ENCODE measurements at regions of chr5 and their contacts with region 1.

Region 1: DNA sequence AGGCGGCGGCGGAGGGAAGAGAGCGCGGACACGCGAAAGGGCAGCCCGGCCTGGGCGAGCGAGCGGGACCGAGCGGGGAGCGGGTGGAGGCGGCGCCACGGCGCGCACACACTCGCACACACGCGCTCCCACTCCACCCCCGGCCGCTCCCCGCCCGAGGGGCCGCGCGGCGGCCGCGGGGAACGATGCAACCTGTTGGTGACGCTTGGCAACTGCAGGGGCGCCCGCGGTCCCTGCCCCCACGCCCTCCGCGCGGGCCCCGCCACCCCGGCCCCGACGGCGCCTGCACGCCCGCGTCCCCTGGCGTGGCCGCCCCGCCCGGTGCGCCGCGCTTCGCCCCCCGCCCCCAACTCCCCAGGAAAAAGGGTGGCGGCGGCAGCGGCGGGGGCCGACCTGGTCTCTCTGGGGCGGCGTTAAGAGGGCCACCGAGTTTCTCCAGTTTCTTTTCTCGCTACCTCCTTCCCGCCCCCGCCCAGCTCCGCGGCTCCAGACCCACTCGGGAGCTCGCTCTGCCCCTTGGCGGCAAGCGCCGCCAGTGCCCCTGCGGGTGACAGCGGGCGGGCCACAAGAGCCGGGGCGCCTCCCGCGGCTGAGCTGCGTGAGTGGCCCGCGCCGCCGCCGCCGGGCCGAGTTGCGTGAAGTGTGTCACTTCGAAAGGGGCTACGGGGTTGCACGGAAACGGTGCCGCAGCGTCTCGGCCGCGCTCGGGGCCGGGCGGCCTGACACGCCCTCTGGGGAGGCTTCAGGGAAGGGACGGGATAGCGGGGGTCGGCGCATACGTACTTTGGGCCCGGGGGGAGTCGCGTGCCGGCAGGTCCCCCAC is at the start of gene NR3C1:
- DNase-seq: peak; percentile 94
- H3K4me3 ChIP-seq: peak within 1 kb of the TSS; percentile 99
- H3K27ac ChIP-seq: peak within 1 kb of the TSS; percentile 98
- H3K4me1 ChIP-seq: peaks cover 10% of the 10 kb centered on the region; the same call in 1 of the 2 replicates
- H3K27me3 ChIP-seq: no peaks in the 10 kb centered on the region
- total RNA-seq, gene NR3C1: 121 and 125 TPM in 2 replicates

Region 2: GRCh38 chr5:143824851-143825720 is 421.3 kb after region 1 on chr5:
- in situ Hi-C with region 1: loop called (anchors 5 kb)
- DNase-seq: peak; percentile 75
- H3K4me3 ChIP-seq: no peak overlapping the region
- H3K27ac ChIP-seq: no peak overlapping the region
- H3K4me1 ChIP-seq: peaks cover 25% of the 10 kb centered on the region
- H3K27me3 ChIP-seq: no peaks in the 10 kb centered on the region

Region 3: DNA sequence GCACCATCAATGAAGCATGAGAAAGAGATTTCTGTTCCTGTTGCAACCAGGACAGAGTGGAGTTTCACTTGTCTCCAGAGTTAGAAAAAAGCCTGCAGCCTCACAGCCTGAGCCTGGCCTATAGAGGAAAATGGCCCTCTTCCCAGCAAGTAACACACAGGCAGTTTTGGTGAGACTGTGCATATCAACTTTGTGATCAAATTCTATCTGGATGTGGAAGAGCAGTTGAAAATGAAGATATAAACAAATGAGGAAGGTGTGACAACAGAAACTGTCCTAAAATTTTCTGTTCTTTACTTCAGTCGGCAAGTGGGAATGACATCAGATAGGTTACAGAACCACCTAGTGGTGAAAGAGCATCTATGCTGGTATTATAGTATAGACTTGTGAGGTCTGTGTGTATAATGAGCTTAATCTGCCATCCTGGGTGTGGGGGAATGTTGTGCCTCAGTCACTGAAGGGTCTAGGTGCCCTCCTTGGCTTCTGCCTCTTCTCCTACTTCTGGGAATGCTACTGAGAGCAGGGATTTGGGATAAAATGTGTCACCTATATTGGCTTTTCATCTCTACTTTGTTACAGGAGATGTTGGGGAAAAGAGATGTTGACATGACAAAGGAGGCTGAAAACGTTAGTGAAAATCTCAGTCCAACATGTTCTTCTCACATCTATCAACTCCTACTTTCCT is 738.5 kb after region 1 on chr5:
- in situ Hi-C with region 1: loop called (anchors 10 kb)
- DNase-seq: peak; percentile 81
- H3K4me3 ChIP-seq: no peak overlapping the region
- H3K27ac ChIP-seq: peak overlapping the region; percentile 28
- H3K4me1 ChIP-seq: peaks cover 37% of the 10 kb centered on the region
- H3K27me3 ChIP-seq: no peaks in the 10 kb centered on the region